Activated T-helper 2 cell treated with anti-CD3 and anti-CD28 coated beads, Interferon-gamma antibody, Interleukin-2, Interleukin-4, amounts not matched to agents 10 μg/mL and 5 μg/mL and 100 μg/mL, durations not matched to agents 14 hours and 24 hours and 36 hours (primary cell): ENCODE measurements at regions of chr10 and their contacts with region 1.

Region 1: DNA sequence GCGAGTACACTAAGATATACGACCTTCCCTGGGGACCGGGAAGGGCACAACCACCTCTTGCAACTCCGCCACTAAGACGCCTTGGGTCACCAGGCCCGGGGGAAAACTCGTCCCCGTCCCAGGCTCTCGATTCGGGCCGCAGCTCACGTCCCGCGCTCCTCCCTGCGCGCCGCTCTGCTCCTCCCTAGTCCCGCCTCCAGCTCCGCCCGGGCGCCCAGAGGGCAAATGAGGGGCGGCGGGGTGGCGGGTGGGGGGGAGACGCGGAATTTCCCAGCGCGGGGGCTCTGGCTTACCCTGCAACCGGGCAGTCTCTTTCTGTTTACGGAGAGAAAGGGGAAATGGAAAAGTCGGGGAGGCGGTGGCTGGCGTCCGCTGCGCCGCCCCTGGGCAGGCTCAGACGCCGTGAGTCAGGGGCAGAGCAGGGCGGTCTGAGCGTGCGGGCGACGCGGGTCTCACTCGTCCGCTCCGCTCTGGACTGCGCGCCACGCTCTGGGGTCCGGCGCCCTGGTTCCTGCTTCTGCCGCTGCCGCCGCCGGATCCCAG is at the start of gene MAP3K8:
- DNase-seq: peak; percentile 76
- H3K4me3 Mint-ChIP-seq: peak within 1 kb of the TSS; percentile 82
- H3K27ac Mint-ChIP-seq: peak within 1 kb of the TSS; percentile 76
- H3K4me1 Mint-ChIP-seq: peaks cover 53% of the 10 kb centered on the region
- H3K27me3 Mint-ChIP-seq: peaks cover 4% of the 10 kb centered on the region
- total RNA-seq, gene MAP3K8: 33.5 and 37.1 TPM in 2 replicates

Region 2: GRCh38 chr10:30027057-30028005 is 406.5 kb before region 1 on chr10:
- intact Hi-C with region 1: loop called (anchors 5 kb)
- DNase-seq: peak; percentile 95
- H3K4me3 Mint-ChIP-seq: peak overlapping the region; percentile 97
- H3K27ac Mint-ChIP-seq: peak overlapping the region; percentile 91
- H3K4me1 Mint-ChIP-seq: peaks cover 62% of the 10 kb centered on the region
- H3K27me3 Mint-ChIP-seq: no peaks in the 10 kb centered on the region

Region 3: GRCh38 chr10:30447125-30447799 is 13.5 kb after region 1 on chr10:
- intact Hi-C with region 1: loop called (anchors 1 kb)
- DNase-seq: no peak
- H3K4me3 Mint-ChIP-seq: no peak overlapping the region
- H3K27ac Mint-ChIP-seq: no peak overlapping the region
- H3K4me1 Mint-ChIP-seq: peaks cover 28% of the 10 kb centered on the region
- H3K27me3 Mint-ChIP-seq: no peaks in the 10 kb centered on the region

Region 4: GRCh38 chr10:30529373-30529998 is 95.7 kb after region 1 on chr10:
- intact Hi-C with region 1: loop called (anchors 1 kb)
- DNase-seq: peak; percentile 74
- H3K4me3 Mint-ChIP-seq: peak overlapping the region; percentile 64
- H3K27ac Mint-ChIP-seq: peak overlapping the region; percentile 79
- H3K4me1 Mint-ChIP-seq: peaks cover 62% of the 10 kb centered on the region
- H3K27me3 Mint-ChIP-seq: peaks cover 2% of the 10 kb centered on the region

Region 5: DNA sequence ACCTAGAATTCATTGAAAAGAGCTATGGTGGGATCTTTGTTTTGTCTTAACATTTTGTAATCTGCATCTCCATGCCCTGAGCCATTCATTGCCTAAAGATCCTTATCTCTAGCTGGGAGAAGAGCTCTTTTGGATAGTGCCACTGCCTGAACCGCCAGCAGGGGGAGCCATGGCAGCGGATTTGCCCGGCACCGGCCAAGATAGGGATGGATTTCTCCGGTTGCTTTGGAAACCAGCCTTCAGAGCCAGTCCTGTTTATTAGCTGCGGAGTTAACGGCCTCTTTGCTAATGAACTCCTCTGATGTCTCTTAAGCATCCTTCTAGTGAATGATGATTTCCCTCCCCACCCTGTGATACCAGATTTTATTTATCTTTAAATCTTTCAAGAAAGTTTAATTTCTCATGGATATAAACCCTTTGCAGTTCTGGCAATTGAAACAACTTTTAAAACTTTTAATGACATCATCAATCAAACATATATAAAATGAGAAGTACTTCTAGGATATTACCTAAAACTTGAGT is 254.0 kb after region 1 on chr10:
- intact Hi-C with region 1: loop called (anchors 10 kb)
- DNase-seq: peak; percentile 62
- H3K4me3 Mint-ChIP-seq: no peak overlapping the region
- H3K27ac Mint-ChIP-seq: peak overlapping the region; percentile 92
- H3K4me1 Mint-ChIP-seq: peaks cover 75% of the 10 kb centered on the region
- H3K27me3 Mint-ChIP-seq: no peaks in the 10 kb centered on the region

Region 6: GRCh38 chr10:31340343-31340742 is 906.5 kb after region 1 on chr10:
- intact Hi-C with region 1: loop called (anchors 10 kb)
- DNase-seq: no peak
- H3K4me3 Mint-ChIP-seq: no peak overlapping the region
- H3K27ac Mint-ChIP-seq: no peak overlapping the region
- H3K4me1 Mint-ChIP-seq: peaks cover 23% of the 10 kb centered on the region
- H3K27me3 Mint-ChIP-seq: no peaks in the 10 kb centered on the region